ENCODE measurements at regions of chr17 and their contacts with region 1.

Region 1: GRCh38 chr17:27756512-27757371 is 43.6 kb downstream of the NOS2 start:
- DNase-seq: no peak
- H3K4me3 ChIP-seq: no peak overlapping the region
- H3K27ac ChIP-seq: no peak overlapping the region
- H3K4me1 ChIP-seq: peaks cover 0 to 7% (median 0%) of the 10 kb centered on the region in 6 donors
- H3K27me3 ChIP-seq: peaks cover 0 to 11% (median 0%) of the 10 kb centered on the region in 7 donors
- CTCF ChIP-seq: peak; percentile 57 to 91 (median 86)
- POLR2A ChIP-seq: no peak

Region 2: DNA sequence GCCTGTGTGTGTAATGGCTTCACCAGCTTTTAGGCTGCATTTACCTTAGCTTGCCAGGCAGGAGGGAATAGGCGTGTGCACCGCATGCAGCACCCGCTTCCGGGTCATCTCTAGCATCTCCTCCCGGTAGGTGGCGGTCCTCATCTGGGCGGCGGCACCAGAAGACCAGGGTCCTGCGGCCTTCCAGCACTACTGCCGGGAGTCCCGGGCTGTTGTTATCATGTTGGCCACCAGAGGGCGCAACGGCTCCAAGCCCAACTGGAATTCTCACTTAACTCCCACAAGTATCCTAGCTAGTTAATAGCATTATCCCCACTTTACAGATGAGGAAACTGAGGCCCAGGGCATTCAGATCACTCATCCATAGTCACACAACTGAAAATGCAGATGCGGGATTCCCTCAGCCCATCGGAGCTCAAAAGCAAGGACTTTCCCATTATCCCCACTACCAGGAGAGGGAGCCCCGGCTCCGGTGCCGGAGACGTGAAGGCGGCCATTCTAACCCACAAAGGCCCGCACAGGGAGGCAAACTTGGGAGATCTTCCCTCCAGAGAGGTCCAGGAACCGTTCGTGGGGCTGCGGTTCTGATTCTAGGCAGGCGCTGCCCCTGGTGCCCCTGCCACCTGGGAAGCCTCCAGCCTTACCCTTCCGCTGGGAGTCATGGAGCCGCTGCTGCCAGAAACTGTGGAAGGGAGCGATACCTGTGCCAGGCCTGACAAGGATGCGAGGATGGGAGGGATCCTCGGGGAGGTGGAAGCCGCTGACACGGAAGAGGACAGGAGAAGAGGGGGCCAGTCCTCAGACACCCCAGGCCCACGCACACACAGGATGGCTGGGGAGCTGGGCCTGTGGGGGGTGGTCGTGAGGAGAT is 101.9 kb before region 1 on chr17:
- intact Hi-C with region 1: loop called (anchors 2 kb)
- DNase-seq: peak; percentile 91
- H3K4me3 ChIP-seq: no peak overlapping the region
- H3K27ac ChIP-seq: no peak overlapping the region
- H3K4me1 ChIP-seq: peaks cover 0 to 8% (median 4%) of the 10 kb centered on the region in 6 donors
- H3K27me3 ChIP-seq: peaks cover 0 to 5% (median 0%) of the 10 kb centered on the region in 7 donors
- CTCF ChIP-seq: peak; percentile 75 to 95 (median 90)
- POLR2A ChIP-seq: no peak